T-cell (primary cell): ENCODE measurements at regions of chr6 and their contacts with region 1.

Region 1: GRCh38 chr6:84671183-84671582 is 93.2 kb downstream of the TBX18 start:
- DNase-seq: no peak
- ATAC-seq: no peak
- H3K4me3 ChIP-seq: no peak overlapping the region
- H3K4me3 Mint-ChIP-seq: no peak overlapping the region
- H3K27ac ChIP-seq: no peak overlapping the region
- H3K27ac Mint-ChIP-seq: no peak overlapping the region
- H3K4me1 ChIP-seq: no peaks in the 10 kb centered on the region
- H3K4me1 Mint-ChIP-seq: no peaks in the 10 kb centered on the region
- H3K27me3 ChIP-seq: no peaks in the 10 kb centered on the region
- H3K27me3 Mint-ChIP-seq: no peaks in the 10 kb centered on the region

Region 2: GRCh38 chr6:84432619-84433018 is 238.6 kb before region 1 on chr6:
- CTCF ChIA-PET with region 1: no interaction called
- POLR2A ChIA-PET with region 1: interaction called in 1 of 2 experiments, 10 read pairs
- DNase-seq: no peak
- ATAC-seq: no peak
- H3K4me3 ChIP-seq: no peak overlapping the region
- H3K4me3 Mint-ChIP-seq: no peak overlapping the region
- H3K27ac ChIP-seq: no peak overlapping the region
- H3K27ac Mint-ChIP-seq: no peak overlapping the region
- H3K4me1 ChIP-seq: no peaks in the 10 kb centered on the region
- H3K4me1 Mint-ChIP-seq: no peaks in the 10 kb centered on the region
- H3K27me3 ChIP-seq: peaks cover 0 to 4% of the 10 kb centered on the region in 2 experiments
- H3K27me3 Mint-ChIP-seq: peaks cover 3 to 4% of the 10 kb centered on the region in 2 donors

Region 3: GRCh38 chr6:84635081-84635761 is 36.0 kb before region 1 on chr6:
- CTCF ChIA-PET with region 1: no interaction called
- POLR2A ChIA-PET with region 1: no interaction called
- DNase-seq: no peak
- ATAC-seq: no peak
- H3K4me3 ChIP-seq: no peak overlapping the region
- H3K4me3 Mint-ChIP-seq: no peak overlapping the region
- H3K27ac ChIP-seq: no peak overlapping the region
- H3K27ac Mint-ChIP-seq: no peak overlapping the region
- H3K4me1 ChIP-seq: no peaks in the 10 kb centered on the region
- H3K4me1 Mint-ChIP-seq: no peaks in the 10 kb centered on the region
- H3K27me3 ChIP-seq: no peaks in the 10 kb centered on the region
- H3K27me3 Mint-ChIP-seq: no peaks in the 10 kb centered on the region